Astrocyte of the cerebellum (primary cell): ENCODE measurements at regions of chr2 and their contacts with region 1.

Region 1: GRCh38 chr2:233185963-233186362 is 65.5 kb upstream of the ATG16L1 start:
- DNase-seq: no peak
- H3K4me3 ChIP-seq: no peak overlapping the region
- CTCF ChIP-seq: no peak

Region 2: DNA sequence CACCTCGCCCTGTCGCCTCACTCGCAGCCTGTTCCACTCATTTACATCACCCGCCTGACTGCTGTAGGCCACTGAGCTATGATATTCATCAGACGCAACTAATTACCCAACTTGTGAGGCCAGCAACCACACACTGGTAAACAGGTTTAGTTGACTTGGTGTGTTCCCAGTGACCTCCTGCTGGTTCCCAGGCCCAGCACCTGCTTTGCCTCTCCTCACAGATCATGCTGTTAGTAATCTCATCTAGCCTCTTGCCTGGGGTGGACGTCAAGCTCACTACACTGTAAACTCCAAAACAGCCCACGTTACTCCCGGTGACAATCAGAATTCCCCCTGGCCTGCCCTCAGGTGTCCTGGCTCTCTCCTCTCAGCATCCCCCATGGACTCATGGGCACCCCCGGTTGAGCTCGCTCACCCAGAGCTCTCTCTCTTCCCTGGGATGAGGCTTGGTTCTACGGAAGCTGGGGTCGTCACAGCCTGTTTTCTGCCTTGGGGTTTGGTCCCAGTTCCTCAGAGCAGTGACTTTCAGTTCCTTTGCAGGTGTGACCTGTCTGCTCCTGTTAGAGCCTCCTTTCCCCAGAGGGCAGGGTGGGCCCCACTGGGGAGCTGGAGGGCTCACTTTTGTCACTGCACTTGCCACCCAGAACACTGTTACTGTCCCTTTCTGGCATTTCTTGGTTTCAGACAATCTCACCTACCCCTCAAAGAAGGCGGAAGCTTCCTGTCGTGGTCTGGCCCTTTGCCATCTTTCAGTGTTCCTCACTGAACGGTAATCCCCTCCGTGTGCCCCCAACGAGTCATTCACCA is 85.6 kb before region 1 on chr2:
- in situ Hi-C with region 1: loop called (anchors 10 kb)
- DNase-seq: no peak
- H3K4me3 ChIP-seq: no peak overlapping the region
- CTCF ChIP-seq: no peak